Transverse colon (tissue), 4 donors: ENCODE measurements at regions of chr15 and their contacts with region 1.

Region 1: DNA sequence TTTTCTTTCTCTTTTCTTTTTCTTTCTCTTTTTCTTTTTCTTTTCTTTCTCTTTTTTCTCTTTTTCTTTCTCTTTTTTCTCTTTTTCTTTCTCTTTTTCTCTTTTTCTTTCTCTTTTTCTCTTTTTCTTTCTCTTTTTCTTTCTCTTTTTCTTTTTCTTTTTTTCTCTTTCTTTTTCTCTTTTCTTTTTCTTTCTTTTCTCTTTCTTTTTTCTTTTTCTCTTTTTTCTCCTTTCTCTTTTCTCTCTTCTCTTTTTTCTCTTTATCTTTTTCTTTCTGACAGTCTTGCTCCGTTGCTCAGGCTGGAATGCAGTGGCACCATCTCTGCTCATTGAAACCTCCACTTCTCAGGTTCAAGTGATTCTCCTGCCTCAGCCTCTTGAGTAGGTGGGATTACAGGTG is 335.7 kb downstream of the SQOR start:
- DNase-seq: no peak
- H3K4me3 ChIP-seq: no peak overlapping the region
- H3K27ac ChIP-seq: no peak overlapping the region
- H3K4me1 ChIP-seq: no peaks in the 10 kb centered on the region
- H3K27me3 ChIP-seq: no peaks in the 10 kb centered on the region
- CTCF ChIP-seq: no peak
- EP300 ChIP-seq: no peak
- POLR2A ChIP-seq: no peak

Region 2: GRCh38 chr15:46137443-46137842 is 166.9 kb after region 1 on chr15:
- in situ Hi-C with region 1: no loop called
- intact Hi-C with region 1: loop called (anchors 5 kb)
- DNase-seq: no peak
- H3K4me3 ChIP-seq: no peak overlapping the region
- H3K27ac ChIP-seq: no peak overlapping the region
- H3K4me1 ChIP-seq: no peaks in the 10 kb centered on the region
- H3K27me3 ChIP-seq: no peaks in the 10 kb centered on the region
- CTCF ChIP-seq: no peak
- EP300 ChIP-seq: no peak
- POLR2A ChIP-seq: no peak